BJ (cell line): ENCODE measurements at regions of chr15 and their contacts with region 1.

Region 1: DNA sequence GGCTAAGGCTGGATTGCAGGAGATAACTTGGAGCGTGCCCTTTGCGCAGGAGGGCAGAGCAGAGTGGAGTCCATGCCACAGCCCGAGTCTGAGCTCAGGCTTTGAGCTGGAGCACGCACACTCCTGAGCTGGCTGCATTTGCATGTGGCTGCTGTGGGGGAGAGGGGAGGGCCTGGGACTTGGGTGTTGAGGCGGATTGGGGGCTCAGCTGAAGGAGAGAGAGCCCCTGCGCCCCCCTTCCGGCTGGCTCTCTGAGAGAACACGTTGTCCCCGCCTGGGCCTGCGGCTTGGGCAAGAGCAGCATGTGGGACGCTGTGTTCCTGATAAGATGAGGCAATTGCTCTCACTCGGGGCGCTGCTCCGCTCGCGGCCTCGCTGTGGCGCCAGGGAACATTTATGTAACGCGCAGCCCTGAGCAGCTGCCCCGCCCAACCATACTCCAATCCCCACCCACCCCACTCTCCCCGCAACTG is 39.1 kb downstream of the KLF13 start:
- DNase-seq: peak; percentile 37
- H3K4me3 ChIP-seq: no peak overlapping the region
- H3K27me3 ChIP-seq: no peaks in the 10 kb centered on the region
- CTCF ChIP-seq: peak; percentile 62

Region 2: DNA sequence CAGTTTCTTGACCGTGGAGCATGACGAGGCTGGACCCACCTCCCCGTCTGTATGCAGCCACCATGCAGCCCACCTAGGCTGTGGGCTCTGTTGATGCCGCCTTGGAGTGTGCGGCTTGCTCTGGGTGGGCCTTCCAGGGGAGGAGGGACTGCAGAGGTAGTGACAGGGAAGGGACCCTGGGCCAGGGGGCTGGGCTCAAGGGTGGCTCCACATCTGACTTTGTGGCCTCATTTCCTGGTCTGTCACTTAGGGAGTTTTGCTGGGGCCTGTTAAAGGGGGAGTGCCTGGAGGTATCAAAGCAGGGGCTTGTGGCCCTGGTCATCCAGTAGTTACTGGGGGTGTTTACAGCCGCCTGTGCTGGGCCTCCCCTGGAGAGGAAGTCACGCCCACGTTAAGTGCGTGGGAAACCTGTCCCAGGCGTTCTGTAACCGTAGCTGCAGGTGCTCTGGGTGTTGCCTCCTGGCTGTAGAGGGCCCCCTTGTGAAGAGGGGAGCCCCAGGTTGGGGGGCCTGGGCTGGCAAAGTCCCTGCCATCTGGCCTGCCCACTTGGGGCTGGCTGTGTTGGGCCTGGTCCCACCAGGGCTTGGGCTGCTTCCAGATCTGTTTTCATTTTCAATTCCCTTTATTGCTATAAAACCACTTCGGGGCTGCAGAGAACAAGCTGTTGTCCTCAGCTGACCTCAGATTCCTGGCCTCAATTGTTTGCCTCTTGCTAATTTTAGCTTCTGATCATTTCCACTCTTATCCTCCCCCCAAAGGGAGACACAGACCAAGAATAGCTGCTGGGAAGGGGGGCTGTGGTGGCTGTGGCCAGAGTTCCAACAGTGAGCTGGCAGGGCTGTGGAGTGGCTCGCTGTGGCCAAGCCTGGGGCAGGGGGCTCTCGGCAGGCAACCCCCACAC is 12.5 kb before region 1 on chr15:
- CTCF ChIA-PET with region 1: interaction called, 15 read pairs
- POLR2A ChIA-PET with region 1: no interaction called
- DNase-seq: peak; percentile 81
- H3K4me3 ChIP-seq: no peak overlapping the region
- H3K27me3 ChIP-seq: no peaks in the 10 kb centered on the region
- CTCF ChIP-seq: no peak

Region 3: DNA sequence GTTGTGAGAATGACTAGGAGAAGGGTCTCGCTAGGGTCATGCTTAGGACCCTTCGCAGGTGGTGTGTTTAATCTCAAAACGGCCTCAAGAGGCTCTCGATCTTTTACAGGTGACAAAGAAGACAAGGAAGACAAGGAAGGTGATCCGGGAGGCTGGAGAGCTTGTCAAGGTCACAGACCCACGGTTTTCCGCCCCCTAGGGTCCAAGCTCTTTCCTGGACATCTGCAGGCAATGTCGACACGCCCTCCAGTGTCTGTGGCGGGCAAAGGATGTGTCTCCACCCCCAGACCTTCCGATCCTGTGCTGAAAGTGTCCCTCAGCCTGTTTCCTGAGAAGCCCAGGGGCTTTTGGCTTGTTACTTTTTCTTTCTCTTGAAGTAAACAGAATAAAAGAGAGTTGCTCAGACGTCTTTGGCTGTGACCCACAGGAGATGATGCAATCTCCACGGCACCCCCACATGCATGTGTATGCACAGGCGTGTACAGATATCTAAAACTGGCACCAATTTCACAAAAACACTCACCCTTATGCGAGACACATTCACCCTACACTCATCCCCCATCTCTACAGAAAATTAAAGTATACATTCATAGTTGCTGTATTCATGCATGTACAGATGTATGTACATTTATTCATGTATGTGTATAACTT is 69.7 kb after region 1 on chr15:
- CTCF ChIA-PET with region 1: interaction called, 27 read pairs
- POLR2A ChIA-PET with region 1: interaction called, 3 read pairs
- DNase-seq: peak; percentile 50
- H3K4me3 ChIP-seq: no peak overlapping the region
- H3K27me3 ChIP-seq: no peaks in the 10 kb centered on the region
- CTCF ChIP-seq: peak; percentile 85

Region 4: GRCh38 chr15:31499953-31500765 is 134.5 kb after region 1 on chr15:
- CTCF ChIA-PET with region 1: no interaction called
- POLR2A ChIA-PET with region 1: no interaction called
- DNase-seq: no peak
- H3K4me3 ChIP-seq: no peak overlapping the region
- H3K27me3 ChIP-seq: no peaks in the 10 kb centered on the region
- CTCF ChIP-seq: no peak